Posterior cingulate gyrus (tissue), 11 donors: ENCODE measurements at regions of chr6 and their contacts with region 1.

Region 1: DNA sequence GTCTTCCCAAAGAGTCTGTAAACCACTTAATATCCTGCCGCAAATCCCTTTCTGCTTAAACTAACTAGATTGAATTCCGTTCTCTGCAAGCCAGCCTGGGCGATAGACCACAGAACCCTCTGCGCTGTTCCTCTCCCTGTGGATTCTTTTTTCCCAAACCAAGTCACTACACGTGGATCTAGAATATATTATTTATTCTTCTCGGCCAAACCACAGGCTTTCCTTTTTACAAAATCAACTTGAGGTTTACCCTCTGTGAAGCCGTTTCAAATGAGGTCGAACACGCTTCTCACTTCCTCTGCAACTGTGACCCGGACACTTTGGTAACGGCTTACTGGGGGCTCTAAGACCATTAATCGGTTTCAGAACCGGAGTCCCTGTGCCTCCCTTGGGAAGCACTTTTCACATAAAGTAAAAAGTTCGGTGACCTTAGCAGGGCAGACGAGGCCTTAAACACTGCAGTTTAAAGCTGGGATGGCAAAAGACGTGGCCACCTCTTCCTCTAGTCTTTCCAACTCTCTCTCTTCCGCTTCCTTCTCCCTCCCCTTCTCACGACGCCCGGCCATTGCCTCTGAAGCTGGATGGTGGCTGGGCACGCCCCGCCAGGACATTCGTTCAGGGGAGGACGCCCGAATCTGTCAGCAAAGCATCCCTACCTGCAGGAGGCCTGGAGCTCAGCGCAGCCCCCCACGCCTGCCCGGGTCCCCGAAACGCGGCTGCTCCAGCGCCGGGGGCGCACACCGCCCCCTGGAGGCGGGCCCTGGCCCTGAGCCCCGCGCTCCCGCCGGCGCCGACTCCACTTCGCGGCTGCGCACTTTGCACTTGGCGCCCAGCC is 55.0 kb upstream of the FOXC1 start:
- DNase-seq: peak; percentile 62 to 95 (median 72)

Region 2: DNA sequence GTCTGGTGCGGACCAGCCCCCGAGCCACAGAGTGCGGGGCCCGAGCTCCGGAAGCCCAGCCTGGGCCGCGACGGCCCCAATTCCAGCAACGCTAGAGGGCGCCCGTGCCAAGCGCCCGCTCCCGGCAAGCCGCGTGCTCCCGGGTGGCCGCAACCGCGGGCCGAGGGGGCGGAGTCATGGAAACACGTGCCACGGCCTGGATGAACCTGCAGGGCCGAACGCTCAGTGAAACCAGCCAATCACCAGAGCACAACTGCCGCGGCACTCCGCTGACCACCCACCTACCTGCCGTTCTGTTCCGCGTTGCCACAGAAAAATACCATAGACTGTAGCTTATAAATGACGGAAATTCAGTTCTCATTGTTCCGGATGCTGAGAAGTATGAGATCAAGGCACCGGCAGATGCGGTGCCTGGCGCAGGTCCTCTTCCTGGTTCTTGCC is 30.6 kb before region 1 on chr6:
- intact Hi-C with region 1: loop called (anchors 2 kb)
- DNase-seq: peak in 8 of 10 donors; percentile 32 to 93 (median 60)

Region 3: GRCh38 chr6:1850121-1850839 is 295.6 kb after region 1 on chr6:
- intact Hi-C with region 1: no loop called
- DNase-seq: no peak